ENCODE measurements at regions of chr3 and their contacts with region 1.

Region 1: DNA sequence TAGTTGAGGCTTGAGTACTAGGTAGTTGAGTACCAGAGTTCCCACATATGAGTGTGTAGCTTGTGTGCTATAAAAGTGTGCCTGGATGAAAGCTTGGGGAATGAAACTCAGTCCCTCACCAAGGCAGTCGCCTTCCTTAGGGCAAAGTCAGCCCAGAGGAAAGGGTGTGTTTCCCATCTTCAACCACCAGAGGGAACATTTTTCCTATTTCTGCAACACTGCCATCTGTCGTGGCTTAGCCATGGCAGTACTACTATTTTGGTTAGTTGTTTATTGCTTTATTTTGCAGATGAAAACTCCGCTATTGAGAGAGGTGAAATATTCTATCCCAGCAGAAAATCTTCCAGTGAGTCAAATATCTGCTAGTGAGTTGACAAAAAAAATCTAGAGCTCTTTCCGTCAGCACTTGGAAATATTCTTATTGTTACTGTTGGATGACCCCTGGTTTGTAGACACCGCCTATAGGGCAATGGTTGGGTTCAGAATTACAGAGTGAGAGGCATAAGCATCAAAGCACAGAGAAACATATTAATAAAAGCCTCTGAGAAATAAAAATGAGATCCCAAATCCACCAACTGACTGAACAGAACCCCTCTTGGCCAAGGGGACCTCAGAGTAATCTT is 239.9 kb downstream of the CPNE4 start:
- DNase-seq: peak in 2 of 9 experiments; percentile 33 to 50
- ATAC-seq: no peak
- H3K4me3 ChIP-seq: no peak overlapping the region
- H3K4me3 Mint-ChIP-seq: no peak overlapping the region
- H3K27ac ChIP-seq: no peak overlapping the region
- H3K27ac Mint-ChIP-seq: no peak overlapping the region
- H3K4me1 ChIP-seq: no peaks in the 10 kb centered on the region
- H3K4me1 Mint-ChIP-seq: peaks cover 5% of the 10 kb centered on the region
- H3K27me3 ChIP-seq: no peaks in the 10 kb centered on the region
- H3K27me3 Mint-ChIP-seq: peaks cover 10% of the 10 kb centered on the region
- CTCF ChIP-seq: peak; percentile 67

Region 2: DNA sequence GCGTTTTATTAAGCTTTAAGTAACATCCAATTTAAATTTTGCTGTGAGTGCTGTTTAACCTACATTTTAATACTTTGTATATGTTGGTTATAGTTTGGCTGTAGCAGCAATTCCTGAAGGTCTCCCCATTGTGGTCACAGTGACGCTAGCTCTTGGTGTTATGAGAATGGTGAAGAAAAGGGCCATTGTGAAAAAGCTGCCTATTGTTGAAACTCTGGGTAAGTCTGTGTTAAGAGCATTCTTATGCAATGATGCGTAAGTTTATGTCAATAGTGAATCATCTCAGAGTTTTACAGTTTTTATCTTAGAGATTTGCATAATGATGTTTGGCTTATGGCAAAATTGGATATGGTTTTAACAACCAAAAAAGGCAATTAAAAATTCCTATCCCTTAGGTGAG is 831.0 kb before region 1 on chr3:
- CTCF ChIA-PET with region 1: no interaction called
- POLR2A ChIA-PET with region 1: no interaction called
- intact Hi-C with region 1: no loop called
- DNase-seq: no peak
- ATAC-seq: no peak
- H3K4me3 ChIP-seq: no peak overlapping the region
- H3K4me3 Mint-ChIP-seq: no peak overlapping the region
- H3K27ac ChIP-seq: no peak overlapping the region
- H3K27ac Mint-ChIP-seq: no peak overlapping the region
- H3K4me1 ChIP-seq: no peaks in the 10 kb centered on the region
- H3K4me1 Mint-ChIP-seq: no peaks in the 10 kb centered on the region
- H3K27me3 ChIP-seq: no peaks in the 10 kb centered on the region
- H3K27me3 Mint-ChIP-seq: no peaks in the 10 kb centered on the region
- CTCF ChIP-seq: no peak

Region 3: DNA sequence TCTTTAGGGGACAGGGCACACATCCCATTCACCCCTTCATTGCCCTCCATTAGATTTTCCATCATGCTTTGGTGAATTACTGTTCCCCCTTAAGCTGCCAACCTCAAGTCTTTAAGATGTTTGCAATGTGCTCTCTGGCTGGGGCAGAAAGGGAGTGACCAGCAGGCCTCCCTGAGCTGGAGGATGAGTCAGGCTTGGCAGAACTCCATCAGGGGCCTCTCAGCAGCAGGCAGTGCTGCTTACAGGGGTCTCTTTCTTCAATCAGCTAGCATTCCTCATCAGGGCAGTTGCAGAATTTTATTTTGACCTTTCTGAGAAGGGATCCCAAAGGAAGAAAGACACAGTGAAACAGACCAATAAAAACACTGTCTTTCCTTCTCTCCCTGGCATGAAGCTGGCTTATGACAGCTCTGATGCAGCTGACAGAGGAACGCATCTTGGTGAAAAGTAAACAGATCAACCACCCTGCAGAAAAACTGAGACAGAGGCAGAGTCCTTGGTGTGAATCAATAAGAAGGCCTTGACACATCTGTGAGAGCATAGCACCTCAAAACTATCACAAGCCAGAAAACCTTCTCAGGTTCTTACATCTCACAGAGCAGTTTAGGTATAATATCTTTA is 203.4 kb before region 1 on chr3:
- CTCF ChIA-PET with region 1: no interaction called
- POLR2A ChIA-PET with region 1: no interaction called
- intact Hi-C with region 1: no loop called
- DNase-seq: no peak
- ATAC-seq: no peak
- H3K4me3 ChIP-seq: no peak overlapping the region
- H3K4me3 Mint-ChIP-seq: no peak overlapping the region
- H3K27ac ChIP-seq: no peak overlapping the region
- H3K27ac Mint-ChIP-seq: no peak overlapping the region
- H3K4me1 ChIP-seq: no peaks in the 10 kb centered on the region
- H3K4me1 Mint-ChIP-seq: no peaks in the 10 kb centered on the region
- H3K27me3 ChIP-seq: no peaks in the 10 kb centered on the region
- H3K27me3 Mint-ChIP-seq: peaks cover 16% of the 10 kb centered on the region
- CTCF ChIP-seq: no peak

Region 4: GRCh38 chr3:132057909-132058308 is 263.0 kb after region 1 on chr3:
- CTCF ChIA-PET with region 1: no interaction called
- POLR2A ChIA-PET with region 1: no interaction called
- intact Hi-C with region 1: no loop called
- DNase-seq: no peak
- ATAC-seq: no peak
- H3K4me3 ChIP-seq: no peak overlapping the region
- H3K4me3 Mint-ChIP-seq: no peak overlapping the region
- H3K27ac ChIP-seq: no peak overlapping the region
- H3K27ac Mint-ChIP-seq: no peak overlapping the region
- H3K4me1 ChIP-seq: no peaks in the 10 kb centered on the region
- H3K4me1 Mint-ChIP-seq: no peaks in the 10 kb centered on the region
- H3K27me3 ChIP-seq: no peaks in the 10 kb centered on the region
- H3K27me3 Mint-ChIP-seq: peaks cover 2% of the 10 kb centered on the region
- CTCF ChIP-seq: no peak

Region 5: DNA sequence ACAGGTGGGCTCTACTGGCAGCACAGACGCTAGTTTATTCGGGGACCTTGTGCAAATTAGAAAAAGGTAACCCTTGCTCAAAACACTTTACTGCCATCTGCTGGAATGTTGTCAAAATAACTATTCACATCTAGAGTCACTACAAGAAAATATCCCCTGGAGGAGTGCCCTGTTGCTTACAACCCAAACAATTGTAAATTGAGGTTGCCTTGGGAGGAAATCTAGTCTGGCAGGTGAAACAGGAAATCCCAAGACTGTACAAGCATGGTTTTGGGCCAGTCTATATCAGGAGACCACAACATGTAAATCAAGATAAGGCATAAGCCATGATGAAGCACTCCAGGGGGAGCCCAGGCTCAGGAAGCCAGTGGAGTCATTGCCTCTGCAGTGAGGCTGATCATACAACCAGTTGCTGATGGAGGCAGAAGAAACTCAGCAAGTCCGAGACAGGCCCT is 385.5 kb after region 1 on chr3:
- CTCF ChIA-PET with region 1: no interaction called
- POLR2A ChIA-PET with region 1: no interaction called
- intact Hi-C with region 1: loop called in 1 of 2 experiments (anchors 2 kb)
- DNase-seq: peak in 2 of 9 experiments; percentile 37 to 52
- ATAC-seq: no peak
- H3K4me3 ChIP-seq: no peak overlapping the region
- H3K4me3 Mint-ChIP-seq: no peak overlapping the region
- H3K27ac ChIP-seq: no peak overlapping the region
- H3K27ac Mint-ChIP-seq: no peak overlapping the region
- H3K4me1 ChIP-seq: no peaks in the 10 kb centered on the region
- H3K4me1 Mint-ChIP-seq: peaks cover 5% of the 10 kb centered on the region
- H3K27me3 ChIP-seq: no peaks in the 10 kb centered on the region
- H3K27me3 Mint-ChIP-seq: no peaks in the 10 kb centered on the region
- CTCF ChIP-seq: peak; percentile 30

Region 6: DNA sequence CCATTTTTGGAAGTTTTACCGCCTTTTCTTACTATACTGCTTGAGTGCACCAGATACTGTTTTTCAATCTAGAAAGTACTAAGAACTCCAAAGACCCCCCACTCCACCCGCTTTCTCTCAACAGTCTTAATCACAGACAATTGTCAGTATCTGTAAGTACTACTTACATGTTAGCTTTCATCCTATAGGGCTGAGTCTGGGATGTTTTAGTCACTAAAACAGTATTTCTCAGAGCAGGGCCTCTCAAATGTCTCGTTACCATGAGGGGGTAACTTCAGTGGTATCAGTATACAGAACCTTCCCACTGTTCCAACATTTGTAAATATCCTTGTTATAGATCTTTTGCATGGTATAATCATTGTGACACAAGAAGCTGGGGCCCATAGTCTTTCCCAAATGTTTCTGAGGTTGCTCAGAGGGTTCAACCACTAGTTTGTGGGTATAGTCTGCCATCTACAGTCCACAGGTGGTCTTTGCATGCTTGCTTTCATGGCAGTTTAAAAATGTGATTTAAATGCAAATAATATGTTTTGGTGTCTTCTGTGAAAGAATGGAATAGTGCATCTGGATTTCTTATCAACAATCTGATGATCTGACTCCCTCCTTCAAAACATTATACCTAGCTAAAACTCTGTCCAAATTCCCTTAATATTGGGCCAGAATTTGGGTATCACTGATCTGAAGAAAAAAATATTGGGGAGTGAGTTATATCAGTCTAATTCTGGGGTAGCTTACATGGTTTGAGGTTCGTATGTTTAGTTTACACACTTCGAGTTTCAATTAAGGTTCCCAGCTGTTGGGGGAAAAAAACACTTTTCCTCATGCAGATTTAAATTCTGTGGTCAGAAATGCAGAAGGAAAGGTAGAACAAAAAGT is 604.4 kb after region 1 on chr3:
- CTCF ChIA-PET with region 1: interaction called, 3 read pairs
- POLR2A ChIA-PET with region 1: no interaction called
- intact Hi-C with region 1: loop called in 1 of 2 experiments (anchors 2 kb)
- DNase-seq: peak in 3 of 9 experiments; percentile 4 to 50 (median 44)
- ATAC-seq: peak; percentile 46
- H3K4me3 ChIP-seq: no peak overlapping the region
- H3K4me3 Mint-ChIP-seq: no peak overlapping the region
- H3K27ac ChIP-seq: no peak overlapping the region
- H3K27ac Mint-ChIP-seq: no peak overlapping the region
- H3K4me1 ChIP-seq: no peaks in the 10 kb centered on the region
- H3K4me1 Mint-ChIP-seq: no peaks in the 10 kb centered on the region
- H3K27me3 ChIP-seq: no peaks in the 10 kb centered on the region
- H3K27me3 Mint-ChIP-seq: no peaks in the 10 kb centered on the region
- CTCF ChIP-seq: peak; percentile 46

Region 7: GRCh38 chr3:132641837-132642538 is 847.1 kb after region 1 on chr3:
- CTCF ChIA-PET with region 1: no interaction called
- POLR2A ChIA-PET with region 1: no interaction called
- intact Hi-C with region 1: loop called in 1 of 2 experiments (anchors 10 kb)
- DNase-seq: peak in 2 of 9 experiments; percentile 39 to 55
- ATAC-seq: peak; percentile 54
- H3K4me3 ChIP-seq: no peak overlapping the region
- H3K4me3 Mint-ChIP-seq: no peak overlapping the region
- H3K27ac ChIP-seq: no peak overlapping the region
- H3K27ac Mint-ChIP-seq: no peak overlapping the region
- H3K4me1 ChIP-seq: no peaks in the 10 kb centered on the region
- H3K4me1 Mint-ChIP-seq: peaks cover 5% of the 10 kb centered on the region
- H3K27me3 ChIP-seq: no peaks in the 10 kb centered on the region
- H3K27me3 Mint-ChIP-seq: no peaks in the 10 kb centered on the region
- CTCF ChIP-seq: peak; percentile 85

Region 8: GRCh38 chr3:132730891-132731580 is 936.2 kb after region 1 on chr3:
- CTCF ChIA-PET with region 1: no interaction called
- POLR2A ChIA-PET with region 1: no interaction called
- intact Hi-C with region 1: no loop called
- DNase-seq: peak in 1 of 9 experiments; percentile 18
- ATAC-seq: no peak
- H3K4me3 ChIP-seq: no peak overlapping the region
- H3K4me3 Mint-ChIP-seq: no peak overlapping the region
- H3K27ac ChIP-seq: no peak overlapping the region
- H3K27ac Mint-ChIP-seq: no peak overlapping the region
- H3K4me1 ChIP-seq: no peaks in the 10 kb centered on the region
- H3K4me1 Mint-ChIP-seq: peaks cover 1% of the 10 kb centered on the region
- H3K27me3 ChIP-seq: peaks cover 0 to 5% of the 10 kb centered on the region in 2 experiments
- H3K27me3 Mint-ChIP-seq: peaks cover 18% of the 10 kb centered on the region
- CTCF ChIP-seq: no peak

Measured in CD8-positive, alpha-beta T cell (primary cell).